ENCODE measurements at regions of chr20 and their contacts with region 1.

Region 1: DNA sequence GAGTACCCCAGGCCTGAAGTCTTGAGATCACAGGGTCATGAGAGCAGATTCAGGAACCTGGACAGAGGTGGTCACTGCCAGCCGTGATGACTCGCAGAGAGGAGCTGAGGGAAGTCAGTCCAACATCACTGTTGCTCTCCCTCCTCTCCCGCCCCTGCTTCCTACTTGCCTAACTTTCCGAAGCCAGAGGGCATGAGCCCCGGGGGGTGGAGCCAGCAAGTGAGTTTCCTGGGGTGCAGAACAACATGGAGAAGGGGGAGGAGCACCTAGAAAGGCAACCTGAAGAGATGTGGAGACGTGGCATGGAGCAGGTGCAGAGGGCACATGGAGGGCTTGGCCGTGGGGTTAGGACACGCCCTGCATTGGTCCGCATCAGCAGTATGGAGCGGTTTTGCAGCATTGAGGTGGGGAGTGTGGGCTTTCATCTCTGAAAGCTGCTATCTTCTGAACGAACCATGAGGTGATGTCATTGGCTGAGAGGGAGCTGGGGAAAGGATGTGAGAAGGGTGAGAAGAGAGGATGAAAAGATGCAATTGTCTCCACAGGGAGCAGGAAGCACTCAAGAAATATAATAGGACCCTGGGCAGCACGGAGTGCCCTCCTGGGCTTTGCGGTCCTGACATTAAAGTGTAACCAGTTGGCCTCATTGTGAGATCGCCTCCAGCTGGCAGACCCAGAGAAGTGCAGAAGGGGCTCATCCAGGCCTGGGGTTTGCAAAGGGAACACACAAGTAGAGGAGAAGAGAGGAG is 25.0 kb downstream of the GDAP1L1 start:
- DNase-seq: peak; percentile 27 to 79
- H3K4me3 ChIP-seq: peak overlapping the region in 1 of 4 experiments; percentile 23; a peak in 2 of 8 replicates
- H3K27ac ChIP-seq: no peak overlapping the region
- H3K4me1 ChIP-seq: peaks cover 0 to 8% (median 5%) of the 10 kb centered on the region in 4 experiments; a peak in 6 of 7 replicates
- H3K27me3 ChIP-seq: no peaks in the 10 kb centered on the region
- CTCF ChIP-seq: peak; percentile 70 to 93 (median 84)
- EP300 ChIP-seq: no peak
- POLR2A ChIP-seq: no peak
- RAD21 ChIP-seq: peak; percentile 46 to 59

Region 2: GRCh38 chr20:44222633-44223368 is 49.3 kb before region 1 on chr20:
- CTCF ChIA-PET with region 1: interaction called, 21 read pairs
- POLR2A ChIA-PET with region 1: no interaction called
- DNase-seq: no peak
- H3K4me3 ChIP-seq: no peak overlapping the region
- H3K27ac ChIP-seq: no peak overlapping the region
- H3K4me1 ChIP-seq: peaks cover 0 to 3% (median under 1%) of the 10 kb centered on the region in 4 experiments; a peak in 1 of 7 replicates
- H3K27me3 ChIP-seq: no peaks in the 10 kb centered on the region
- CTCF ChIP-seq: peak; percentile 52 to 78 (median 54)
- EP300 ChIP-seq: no peak
- POLR2A ChIP-seq: no peak
- RAD21 ChIP-seq: peak; percentile 13 to 41; a peak in 3 of 4 replicates

Region 3: GRCh38 chr20:44253528-44253927 is 18.6 kb before region 1 on chr20:
- CTCF ChIA-PET with region 1: interaction called, 24 read pairs
- POLR2A ChIA-PET with region 1: no interaction called
- DNase-seq: no peak
- H3K4me3 ChIP-seq: no peak overlapping the region
- H3K27ac ChIP-seq: no peak overlapping the region
- H3K4me1 ChIP-seq: peaks cover 0 to 7% (median 1%) of the 10 kb centered on the region in 4 experiments; a peak in 4 of 7 replicates
- H3K27me3 ChIP-seq: no peaks in the 10 kb centered on the region; a peak in 1 of 7 replicates
- CTCF ChIP-seq: peak; percentile 42 to 60 (median 48)
- EP300 ChIP-seq: no peak
- POLR2A ChIP-seq: no peak
- RAD21 ChIP-seq: peak in 1 of 2 experiments; percentile 24; a peak in 1 of 4 replicates

Region 4: DNA sequence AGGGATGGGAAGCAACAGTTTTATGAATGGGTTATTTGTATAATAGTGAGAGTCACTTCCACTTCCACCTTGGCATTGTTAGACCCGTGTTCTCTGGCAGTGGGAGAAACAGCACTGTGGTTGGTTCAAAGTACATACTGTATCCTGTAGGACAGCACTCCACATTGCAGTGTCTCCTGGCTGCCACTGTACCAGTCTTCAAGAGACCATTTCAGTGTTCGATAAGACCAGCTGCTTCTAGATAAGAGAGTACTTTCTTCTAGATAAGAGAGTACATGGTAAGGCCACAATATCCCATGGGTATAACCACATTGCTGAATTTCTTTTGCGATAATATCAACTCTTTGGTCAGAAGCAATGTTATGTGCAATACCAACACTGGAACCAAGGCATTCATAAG is 10.1 kb after region 1 on chr20:
- CTCF ChIA-PET with region 1: interaction called, 24 read pairs
- POLR2A ChIA-PET with region 1: interaction called, 7 read pairs
- DNase-seq: no peak
- H3K4me3 ChIP-seq: no peak overlapping the region
- H3K27ac ChIP-seq: no peak overlapping the region
- H3K4me1 ChIP-seq: no peaks in the 10 kb centered on the region
- H3K27me3 ChIP-seq: no peaks in the 10 kb centered on the region; a peak in 1 of 7 replicates
- CTCF ChIP-seq: no peak
- EP300 ChIP-seq: no peak
- POLR2A ChIP-seq: no peak
- RAD21 ChIP-seq: no peak

Measured in H1 (cell line).